CD4-positive, alpha-beta memory T cell (primary cell): ENCODE measurements at regions of chr12 and their contacts with region 1.

Region 1: GRCh38 chr12:46675736-46676135 is 150.1 kb downstream of the SLC38A4 start:
- DNase-seq: peak in 4 of 5 donors; percentile 15 to 36 (median 22)
- H3K4me3 ChIP-seq: no peak overlapping the region
- H3K4me3 Mint-ChIP-seq: no peak overlapping the region
- H3K27ac ChIP-seq: no peak overlapping the region
- H3K27ac Mint-ChIP-seq: no peak overlapping the region
- H3K4me1 ChIP-seq: no peaks in the 10 kb centered on the region
- H3K4me1 Mint-ChIP-seq: no peaks in the 10 kb centered on the region
- H3K27me3 ChIP-seq: no peaks in the 10 kb centered on the region
- H3K27me3 Mint-ChIP-seq: peaks cover 2 to 3% of the 10 kb centered on the region in 2 donors

Region 2: DNA sequence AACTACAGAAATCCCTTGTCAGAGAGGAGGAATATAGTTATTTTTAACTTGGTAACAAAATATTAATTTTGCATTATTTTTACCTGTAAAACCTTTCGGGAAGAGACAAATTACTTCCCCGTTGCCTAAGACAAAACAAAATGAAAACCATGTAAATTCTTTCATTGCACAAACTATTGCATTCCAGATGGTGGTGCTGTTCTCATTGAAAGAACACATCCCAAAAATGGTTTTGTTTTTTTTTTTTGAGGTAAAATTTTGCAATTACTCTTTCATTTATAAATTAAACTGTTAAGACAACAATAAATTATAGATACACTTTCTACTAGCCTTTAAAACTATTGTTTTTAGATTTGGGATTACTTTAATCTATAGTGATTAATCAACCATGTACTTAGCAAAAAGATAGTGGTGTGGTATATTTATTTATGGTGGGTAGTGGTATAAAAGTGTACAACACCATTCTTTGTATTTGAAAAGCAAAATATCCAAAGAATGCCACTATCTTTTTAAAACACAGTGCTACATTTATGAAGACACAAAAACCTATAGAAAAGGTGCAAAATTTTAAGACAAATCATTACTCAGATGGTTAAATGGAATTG is 522.4 kb before region 1 on chr12:
- CTCF ChIA-PET with region 1: no interaction called
- POLR2A ChIA-PET with region 1: no interaction called
- intact Hi-C with region 1: loop called (anchors 5 kb)
- DNase-seq: peak in 4 of 5 donors; percentile 38 to 50 (median 45)
- H3K4me3 ChIP-seq: no peak overlapping the region
- H3K4me3 Mint-ChIP-seq: no peak overlapping the region
- H3K27ac ChIP-seq: no peak overlapping the region
- H3K27ac Mint-ChIP-seq: no peak overlapping the region
- H3K4me1 ChIP-seq: peaks cover 11% of the 10 kb centered on the region
- H3K4me1 Mint-ChIP-seq: peaks cover 0 to 11% (median 9%) of the 10 kb centered on the region in 4 donors
- H3K27me3 ChIP-seq: no peaks in the 10 kb centered on the region
- H3K27me3 Mint-ChIP-seq: peaks cover under 1 to 4% of the 10 kb centered on the region in 2 donors

Region 3: DNA sequence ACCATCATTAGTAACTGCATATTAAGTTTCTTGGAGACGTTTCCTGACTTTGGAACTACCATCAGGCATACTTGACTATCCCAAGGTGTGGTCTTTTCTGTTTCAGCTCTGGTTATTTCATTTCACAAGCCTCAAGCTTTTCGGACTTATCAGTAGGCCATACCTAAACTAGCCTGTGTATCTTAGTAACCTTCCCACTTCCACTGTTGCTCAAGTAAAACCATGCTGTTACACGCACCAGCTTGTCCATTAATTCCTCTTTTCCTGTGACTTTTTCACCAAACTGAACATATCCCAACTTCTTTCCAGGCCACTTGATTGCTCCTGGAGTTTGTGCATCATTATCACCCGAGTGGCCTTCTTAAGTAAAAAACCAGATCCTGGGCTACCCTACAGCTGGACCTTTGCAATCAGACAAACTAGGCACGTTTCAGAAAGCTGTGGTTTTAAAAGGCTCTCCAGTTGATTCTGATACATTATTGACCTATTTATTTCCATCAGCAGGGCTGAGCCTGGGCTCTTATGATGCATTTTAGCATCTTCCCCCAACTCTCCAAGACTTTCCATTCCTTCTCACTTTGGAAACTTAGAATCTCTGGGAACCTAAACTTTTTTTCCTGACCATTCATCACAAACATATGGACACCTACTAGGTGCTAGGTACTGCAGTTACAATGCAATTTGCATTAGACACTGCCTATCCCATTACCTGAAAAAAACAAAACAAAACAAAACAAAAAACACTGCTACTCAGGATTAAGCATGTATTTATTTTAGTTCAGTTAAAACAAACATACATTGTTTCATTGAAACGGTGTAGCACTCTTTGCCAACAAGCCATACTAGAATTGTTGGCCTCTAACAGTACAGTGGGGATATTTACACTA is 318.1 kb before region 1 on chr12:
- CTCF ChIA-PET with region 1: interaction called, 9 read pairs
- POLR2A ChIA-PET with region 1: no interaction called
- intact Hi-C with region 1: loop called (anchors 5 kb)
- DNase-seq: no peak
- H3K4me3 ChIP-seq: no peak overlapping the region
- H3K4me3 Mint-ChIP-seq: no peak overlapping the region
- H3K27ac ChIP-seq: no peak overlapping the region
- H3K27ac Mint-ChIP-seq: peak overlapping the region in 5 of 7 donors; percentile 4 to 77 (median 5)
- H3K4me1 ChIP-seq: peaks cover 20% of the 10 kb centered on the region
- H3K4me1 Mint-ChIP-seq: peaks cover 13 to 48% (median 34%) of the 10 kb centered on the region in 4 donors
- H3K27me3 ChIP-seq: no peaks in the 10 kb centered on the region
- H3K27me3 Mint-ChIP-seq: no peaks in the 10 kb centered on the region